Mammary epithelial cell (primary cell): ENCODE measurements at regions of chr1 and their contacts with region 1.

Region 1: GRCh38 chr1:32773018-32773763 is 44.0 kb downstream of the YARS1 start:
- DNase-seq: peak; percentile 75
- H3K4me3 ChIP-seq: no peak overlapping the region
- H3K27ac ChIP-seq: no peak overlapping the region
- H3K4me1 ChIP-seq: peaks cover 35% of the 10 kb centered on the region
- H3K27me3 ChIP-seq: no peaks in the 10 kb centered on the region
- CTCF ChIP-seq: peak; percentile 93 to 95

Region 2: GRCh38 chr1:32400876-32401631 is 372.1 kb before region 1 on chr1:
- CTCF ChIA-PET with region 1: no interaction called
- dilution Hi-C with region 1: no loop called
- in situ Hi-C with region 1: no loop called
- intact Hi-C with region 1: loop called (anchors 2 kb)
- DNase-seq: peak; percentile 63
- H3K4me3 ChIP-seq: no peak overlapping the region
- H3K27ac ChIP-seq: no peak overlapping the region
- H3K4me1 ChIP-seq: no peaks in the 10 kb centered on the region
- H3K27me3 ChIP-seq: no peaks in the 10 kb centered on the region
- CTCF ChIP-seq: peak; percentile 94 to 95

Region 3: GRCh38 chr1:32521165-32521564 is 252.0 kb before region 1 on chr1:
- CTCF ChIA-PET with region 1: interaction called, 29 read pairs
- dilution Hi-C with region 1: no loop called
- in situ Hi-C with region 1: no loop called
- intact Hi-C with region 1: loop called (anchors 1 kb)
- DNase-seq: no peak
- H3K4me3 ChIP-seq: no peak overlapping the region
- H3K27ac ChIP-seq: no peak overlapping the region
- H3K4me1 ChIP-seq: no peaks in the 10 kb centered on the region
- H3K27me3 ChIP-seq: no peaks in the 10 kb centered on the region
- CTCF ChIP-seq: peak in 1 of 2 donors; percentile 18

Region 4: GRCh38 chr1:32650752-32651460 is 122.3 kb before region 1 on chr1 and contains the start of gene RBBP4:
- CTCF ChIA-PET with region 1: no interaction called
- dilution Hi-C with region 1: no loop called
- in situ Hi-C with region 1: no loop called
- intact Hi-C with region 1: loop called (anchors 5 kb)
- DNase-seq: peak; percentile 98
- H3K4me3 ChIP-seq: peak within 1 kb of the TSS; percentile 94 to 99 (median 99)
- H3K27ac ChIP-seq: peak within 1 kb of the TSS; percentile 99
- H3K4me1 ChIP-seq: peaks cover 20% of the 10 kb centered on the region
- H3K27me3 ChIP-seq: no peaks in the 10 kb centered on the region
- CTCF ChIP-seq: no peak
- total RNA-seq, gene RBBP4: 108 to 110 TPM

Region 5: DNA sequence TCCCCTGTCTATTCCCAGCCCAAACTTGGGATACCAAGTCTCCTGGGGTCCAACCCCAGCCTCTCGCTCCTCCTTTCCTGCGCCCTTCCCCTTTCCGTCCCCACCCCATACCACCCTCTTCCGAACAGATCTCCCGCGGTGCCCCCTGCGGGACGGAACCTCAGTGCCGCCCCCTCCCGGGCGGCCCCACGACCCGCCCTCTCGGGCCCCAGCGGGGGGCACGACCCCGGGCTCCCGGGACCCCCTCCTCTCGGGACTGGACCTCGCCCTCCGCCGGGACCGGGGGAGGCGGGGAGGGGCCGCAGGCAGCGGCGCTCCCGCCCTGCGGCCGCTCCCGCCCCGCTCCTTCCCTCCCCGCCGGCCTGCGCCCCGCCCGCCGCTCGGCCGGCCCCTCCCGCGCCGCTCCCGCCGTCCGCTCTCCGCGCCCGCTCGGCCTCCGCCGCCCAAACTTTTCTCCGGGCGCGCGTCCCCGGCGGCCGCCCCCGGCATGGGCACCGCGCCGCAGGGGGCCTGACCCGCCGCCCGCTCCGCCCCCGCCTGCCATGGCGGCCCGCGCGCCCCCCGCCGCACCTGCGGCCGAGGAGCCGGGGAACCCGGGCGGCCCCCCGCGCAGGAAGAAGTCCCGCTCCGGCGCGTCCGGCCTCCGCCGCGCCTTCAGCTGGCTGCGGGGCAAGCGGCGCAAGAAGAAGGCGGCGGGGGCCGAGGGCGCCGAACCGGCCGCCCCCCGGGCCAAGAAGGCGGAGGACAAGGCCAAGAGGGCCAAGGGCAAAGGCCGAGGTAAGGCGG is 31.6 kb before region 1 on chr1:
- CTCF ChIA-PET with region 1: no interaction called
- dilution Hi-C with region 1: no loop called
- in situ Hi-C with region 1: no loop called
- intact Hi-C with region 1: loop called (anchors 1 kb)
- DNase-seq: no peak
- H3K4me3 ChIP-seq: peak overlapping the region; percentile 88 to 92 (median 91)
- H3K27ac ChIP-seq: peak overlapping the region; percentile 62
- H3K4me1 ChIP-seq: peaks cover 22% of the 10 kb centered on the region
- H3K27me3 ChIP-seq: no peaks in the 10 kb centered on the region
- CTCF ChIP-seq: peak in 1 of 2 donors; percentile 51

Region 6: GRCh38 chr1:32848354-32849063 is 75.3 kb after region 1 on chr1:
- CTCF ChIA-PET with region 1: no interaction called
- dilution Hi-C with region 1: no loop called
- in situ Hi-C with region 1: no loop called
- intact Hi-C with region 1: no loop called
- DNase-seq: no peak
- H3K4me3 ChIP-seq: no peak overlapping the region
- H3K27ac ChIP-seq: no peak overlapping the region
- H3K4me1 ChIP-seq: no peaks in the 10 kb centered on the region
- H3K27me3 ChIP-seq: no peaks in the 10 kb centered on the region
- CTCF ChIP-seq: no peak

Region 7: DNA sequence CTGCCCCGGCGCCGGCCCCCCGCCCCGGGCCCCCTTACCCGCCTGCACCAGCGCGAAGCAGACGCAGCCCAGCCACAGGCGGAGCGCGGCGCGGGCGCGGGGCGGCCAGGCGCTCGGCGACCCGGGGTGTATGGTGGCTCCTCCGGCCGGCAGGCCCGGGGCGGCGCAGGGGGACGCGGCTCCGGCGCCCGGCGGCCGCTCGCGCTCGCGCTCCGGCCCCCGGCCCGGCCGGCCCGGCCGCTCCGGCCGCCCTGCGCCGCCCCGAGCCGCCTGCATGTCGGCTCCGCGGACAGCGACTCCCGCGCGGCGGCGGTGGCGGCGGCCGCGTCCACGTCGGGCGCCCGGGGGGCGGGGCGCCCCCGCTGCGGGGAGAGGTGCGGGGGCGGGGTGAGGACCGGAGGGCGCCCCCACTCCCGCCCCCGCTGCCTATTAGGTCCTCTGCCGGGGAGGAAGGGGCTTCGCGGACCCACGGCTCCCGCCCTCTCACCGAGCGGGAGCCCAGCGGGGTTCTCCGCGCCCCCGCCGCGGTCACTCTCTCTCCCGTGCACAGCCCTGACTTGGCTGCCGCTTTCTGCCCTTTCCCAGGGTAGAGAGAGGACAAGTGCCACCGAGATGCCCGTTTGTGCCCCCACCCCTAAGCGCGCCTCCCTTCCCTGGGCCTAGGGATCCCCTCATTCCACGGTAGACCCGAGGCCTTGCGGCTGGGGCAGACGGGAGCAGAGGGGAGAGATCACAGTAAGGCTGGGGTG is 97.6 kb after region 1 on chr1 and contains the start of gene FNDC5:
- CTCF ChIA-PET with region 1: no interaction called
- dilution Hi-C with region 1: no loop called
- in situ Hi-C with region 1: no loop called
- intact Hi-C with region 1: loop called (anchors 1 kb)
- DNase-seq: no peak
- H3K4me3 ChIP-seq: peak within 1 kb of the TSS in 2 of 3 experiments; percentile 30 to 40
- H3K27ac ChIP-seq: no peak within 1 kb of the TSS
- H3K4me1 ChIP-seq: no peaks in the 10 kb centered on the region
- H3K27me3 ChIP-seq: peaks cover 8% of the 10 kb centered on the region
- CTCF ChIP-seq: no peak
- total RNA-seq, gene FNDC5: not detected

Region 8: DNA sequence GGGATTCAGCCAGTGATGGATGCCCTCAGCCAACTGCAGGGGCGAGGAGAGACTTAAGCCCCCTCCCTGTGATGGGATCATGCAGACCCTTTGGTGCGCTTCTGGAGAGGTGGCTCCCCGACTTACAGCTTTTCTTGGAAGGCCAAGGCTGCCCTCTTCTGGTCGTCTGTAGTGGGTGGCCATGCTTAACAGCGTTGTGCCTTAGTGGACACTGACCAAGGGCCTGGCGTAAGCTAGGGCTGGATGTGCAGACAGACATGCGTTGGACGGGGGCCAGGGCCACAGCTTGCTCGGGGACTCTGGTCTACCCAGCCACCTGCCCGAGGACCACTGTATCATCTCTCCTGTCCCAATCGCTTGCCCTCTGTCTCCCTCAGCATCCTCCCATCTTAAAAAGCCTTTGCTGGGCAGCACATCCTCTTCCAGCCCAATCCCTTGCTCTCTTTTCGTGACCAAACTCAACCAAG is 313.2 kb after region 1 on chr1:
- CTCF ChIA-PET with region 1: no interaction called
- dilution Hi-C with region 1: no loop called
- in situ Hi-C with region 1: no loop called
- intact Hi-C with region 1: loop called (anchors 5 kb)
- DNase-seq: peak; percentile 51
- H3K4me3 ChIP-seq: no peak overlapping the region
- H3K27ac ChIP-seq: no peak overlapping the region
- H3K4me1 ChIP-seq: peaks cover 7% of the 10 kb centered on the region
- H3K27me3 ChIP-seq: no peaks in the 10 kb centered on the region
- CTCF ChIP-seq: peak; percentile 75 to 89